GM18951 (cell line): ENCODE measurements at regions of chr17 and their contacts with region 1.

Region 1: DNA sequence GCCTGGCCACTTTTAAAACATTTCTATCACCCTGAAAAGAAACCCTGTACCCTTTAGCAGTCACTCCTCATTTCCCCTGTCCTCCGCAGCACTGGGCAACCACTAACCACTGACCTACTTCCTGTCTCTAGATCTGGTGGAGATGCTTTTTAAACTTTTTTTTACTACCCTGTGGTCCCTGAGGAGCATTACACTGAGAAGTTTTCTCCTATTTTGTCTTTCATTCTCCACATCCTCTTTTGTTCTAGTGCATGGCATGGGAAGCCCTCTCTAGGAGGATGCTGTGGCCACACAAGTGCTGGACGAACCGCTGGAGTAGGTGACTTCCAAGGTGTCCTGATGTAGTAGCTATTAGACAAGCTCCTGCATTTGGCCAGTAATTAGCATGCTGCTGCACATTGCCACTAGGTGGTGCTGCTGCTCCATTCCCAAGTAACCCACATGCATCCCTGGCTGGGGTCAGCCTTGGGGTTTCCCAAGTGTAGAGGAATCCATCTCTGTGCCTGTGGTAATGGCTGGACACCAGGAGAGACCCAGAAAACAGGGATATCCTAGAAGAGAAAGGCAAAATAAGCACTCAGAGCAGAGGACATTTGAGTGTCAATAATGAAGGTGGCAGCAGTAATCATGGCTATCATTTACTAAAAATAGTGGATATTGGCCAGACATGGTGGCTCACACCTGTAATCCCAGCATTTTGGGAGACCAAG is 143.8 kb upstream of the CRHR1 start:
- POLR2A ChIP-seq: no peak

Region 2: GRCh38 chr17:45828628-45829027 is 188.3 kb after region 1 on chr17:
- in situ Hi-C with region 1: loop called (anchors 10 kb)
- POLR2A ChIP-seq: no peak